Psoas muscle (tissue), 8 donors: ENCODE measurements at regions of chr17 and their contacts with region 1.

Region 1: GRCh38 chr17:46995841-46996571 is 17.0 kb upstream of the RPRML start:
- DNase-seq: no peak
- ATAC-seq: no peak
- H3K4me3 ChIP-seq: no peak overlapping the region
- H3K27ac ChIP-seq: no peak overlapping the region
- H3K4me1 ChIP-seq: no peaks in the 10 kb centered on the region
- H3K27me3 ChIP-seq: no peaks in the 10 kb centered on the region
- CTCF ChIP-seq: no peak

Region 2: GRCh38 chr17:46841561-46842379 is 154.2 kb before region 1 on chr17:
- intact Hi-C with region 1: loop called in 1 of 2 experiments (anchors 10 kb)
- DNase-seq: no peak
- ATAC-seq: peak in 3 of 4 donors; percentile 49 to 68 (median 51)
- H3K4me3 ChIP-seq: no peak overlapping the region
- H3K27ac ChIP-seq: no peak overlapping the region
- H3K4me1 ChIP-seq: no peaks in the 10 kb centered on the region
- H3K27me3 ChIP-seq: peaks cover 0 to 52% (median 8%) of the 10 kb centered on the region in 3 donors
- CTCF ChIP-seq: peak; percentile 65

Region 3: DNA sequence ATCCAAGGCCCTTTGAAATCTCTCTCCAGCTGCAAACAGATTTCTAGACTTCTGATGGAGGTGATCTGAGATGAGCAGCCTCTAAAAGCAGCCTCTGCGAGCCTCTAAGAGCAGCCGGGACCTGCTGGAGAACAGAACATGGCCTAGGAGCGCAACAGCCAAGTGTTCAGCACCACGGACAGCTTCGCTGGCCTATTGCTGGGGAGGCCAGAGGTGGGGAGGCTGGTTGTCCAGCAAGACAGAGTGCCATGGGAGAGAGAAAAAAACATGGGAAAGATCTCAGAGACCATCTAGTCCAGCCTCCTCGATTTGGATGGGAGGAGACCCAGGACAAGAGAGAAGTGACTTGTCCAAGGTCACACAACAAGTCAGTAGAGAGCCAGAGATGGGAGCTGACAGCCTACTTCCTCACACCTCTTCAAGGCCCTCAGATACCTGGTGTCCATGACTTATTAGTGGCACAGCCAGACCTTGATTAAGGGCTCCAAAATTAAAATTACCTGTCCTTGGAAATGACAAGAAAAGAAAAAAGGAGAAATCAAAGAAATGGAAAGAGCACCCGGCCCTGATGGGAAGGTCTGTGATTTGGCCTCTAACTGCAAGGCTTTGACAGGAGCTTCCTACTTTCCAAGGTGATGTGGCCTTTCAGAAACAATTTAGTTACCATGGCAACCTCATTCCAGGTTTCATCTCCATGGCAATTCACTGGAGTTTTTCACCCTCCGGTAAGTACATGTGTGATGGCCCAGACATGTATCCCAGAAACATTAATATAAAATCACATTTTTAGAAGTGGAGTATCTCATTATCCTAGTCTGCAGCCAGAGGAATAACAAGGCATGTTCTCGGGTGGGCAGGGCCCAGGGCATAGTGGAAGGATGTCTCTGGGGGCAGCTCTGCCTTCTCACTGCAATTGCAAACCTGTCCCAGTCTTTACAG is 31.4 kb before region 1 on chr17:
- intact Hi-C with region 1: no loop called
- DNase-seq: no peak
- ATAC-seq: no peak
- H3K4me3 ChIP-seq: no peak overlapping the region
- H3K27ac ChIP-seq: no peak overlapping the region
- H3K4me1 ChIP-seq: no peaks in the 10 kb centered on the region
- H3K27me3 ChIP-seq: no peaks in the 10 kb centered on the region
- CTCF ChIP-seq: no peak